Aorta (tissue), 5 donors: ENCODE measurements at regions of chr20 and their contacts with region 1.

Region 1: GRCh38 chr20:30963591-30963990 is 293.9 kb upstream of the DEFB115 start:
- DNase-seq: no peak
- ATAC-seq: no peak
- H3K4me3 ChIP-seq: no peak overlapping the region
- H3K27ac ChIP-seq: no peak overlapping the region
- H3K4me1 ChIP-seq: no peaks in the 10 kb centered on the region
- H3K27me3 ChIP-seq: no peaks in the 10 kb centered on the region

Region 2: DNA sequence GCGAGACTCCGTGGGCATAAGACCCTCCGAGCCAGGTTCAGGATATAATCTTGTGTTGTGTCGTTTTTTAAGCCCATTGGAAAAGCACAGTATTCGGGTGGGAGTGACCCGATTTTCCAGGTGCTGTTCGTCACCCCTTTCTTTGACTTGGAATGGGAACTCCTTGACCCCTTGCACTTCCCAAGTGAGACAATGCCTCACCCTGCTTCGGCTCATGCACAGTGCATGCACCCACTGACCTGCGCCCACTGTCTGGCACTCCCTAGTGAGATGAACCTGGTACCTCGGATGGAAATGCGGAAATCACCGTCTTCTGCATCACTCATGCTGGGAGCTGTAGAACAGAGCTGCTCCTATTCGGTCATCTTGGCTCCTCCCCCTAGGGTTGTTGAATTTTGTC is 13.8 kb before region 1 on chr20:
- intact Hi-C with region 1: loop called in 1 of 2 experiments (anchors 2 kb)
- DNase-seq: no peak
- ATAC-seq: no peak
- H3K4me3 ChIP-seq: no peak overlapping the region
- H3K27ac ChIP-seq: no peak overlapping the region
- H3K4me1 ChIP-seq: no peaks in the 10 kb centered on the region
- H3K27me3 ChIP-seq: no peaks in the 10 kb centered on the region

Region 3: GRCh38 chr20:31617432-31618104 is 654.0 kb after region 1 on chr20:
- intact Hi-C with region 1: no loop called
- DNase-seq: no peak
- ATAC-seq: no peak
- H3K4me3 ChIP-seq: no peak overlapping the region
- H3K27ac ChIP-seq: no peak overlapping the region
- H3K4me1 ChIP-seq: no peaks in the 10 kb centered on the region
- H3K27me3 ChIP-seq: no peaks in the 10 kb centered on the region

Region 4: GRCh38 chr20:31908016-31908415 is 944.4 kb after region 1 on chr20:
- intact Hi-C with region 1: no loop called
- DNase-seq: no peak
- ATAC-seq: no peak
- H3K4me3 ChIP-seq: no peak overlapping the region
- H3K27ac ChIP-seq: no peak overlapping the region
- H3K4me1 ChIP-seq: no peaks in the 10 kb centered on the region
- H3K27me3 ChIP-seq: no peaks in the 10 kb centered on the region